Activated B cell treated with CpG ODN at 0.5 μM for 24 hours (primary cell): ENCODE measurements at regions of chr11 and their contacts with region 1.

Region 1: GRCh38 chr11:62880803-62881578 is at the start of gene SLC3A2:
- DNase-seq: peak; percentile 86
- ATAC-seq: peak; percentile 80
- H3K4me3 Mint-ChIP-seq: peak within 1 kb of the TSS; percentile 100
- H3K27ac Mint-ChIP-seq: peak within 1 kb of the TSS; percentile 100
- H3K4me1 Mint-ChIP-seq: peaks cover 46% of the 10 kb centered on the region
- H3K27me3 Mint-ChIP-seq: no peaks in the 10 kb centered on the region
- CTCF ChIP-seq: no peak
- total RNA-seq, gene SLC3A2: 270 and 274 TPM in 2 replicates

Region 2: DNA sequence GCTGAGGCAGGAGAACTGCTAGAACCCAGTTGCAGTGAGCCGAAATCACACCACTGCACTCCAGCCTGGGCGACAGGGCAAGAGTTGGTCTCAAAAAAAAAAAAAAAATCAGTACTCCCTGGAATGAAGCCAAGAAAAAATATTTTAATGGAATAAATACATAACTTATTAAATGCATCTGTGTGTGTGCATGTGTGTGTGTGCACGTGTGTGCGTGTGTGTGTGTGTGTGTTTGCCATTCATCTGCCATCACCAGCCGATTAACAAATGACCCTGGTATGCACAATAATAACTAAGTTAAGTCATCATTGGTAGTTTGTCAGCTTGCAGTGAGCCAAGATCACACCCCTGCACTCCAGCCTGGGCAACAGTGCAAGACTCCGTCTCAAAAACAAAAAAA is 497.2 kb before region 1 on chr11:
- CTCF ChIA-PET with region 1: no interaction called
- POLR2A ChIA-PET with region 1: no interaction called
- intact Hi-C with region 1: loop called (anchors 10 kb)
- DNase-seq: no peak
- ATAC-seq: no peak
- H3K4me3 Mint-ChIP-seq: no peak overlapping the region
- H3K27ac Mint-ChIP-seq: no peak overlapping the region
- H3K4me1 Mint-ChIP-seq: peaks cover 5% of the 10 kb centered on the region
- H3K27me3 Mint-ChIP-seq: no peaks in the 10 kb centered on the region
- CTCF ChIP-seq: no peak

Region 3: DNA sequence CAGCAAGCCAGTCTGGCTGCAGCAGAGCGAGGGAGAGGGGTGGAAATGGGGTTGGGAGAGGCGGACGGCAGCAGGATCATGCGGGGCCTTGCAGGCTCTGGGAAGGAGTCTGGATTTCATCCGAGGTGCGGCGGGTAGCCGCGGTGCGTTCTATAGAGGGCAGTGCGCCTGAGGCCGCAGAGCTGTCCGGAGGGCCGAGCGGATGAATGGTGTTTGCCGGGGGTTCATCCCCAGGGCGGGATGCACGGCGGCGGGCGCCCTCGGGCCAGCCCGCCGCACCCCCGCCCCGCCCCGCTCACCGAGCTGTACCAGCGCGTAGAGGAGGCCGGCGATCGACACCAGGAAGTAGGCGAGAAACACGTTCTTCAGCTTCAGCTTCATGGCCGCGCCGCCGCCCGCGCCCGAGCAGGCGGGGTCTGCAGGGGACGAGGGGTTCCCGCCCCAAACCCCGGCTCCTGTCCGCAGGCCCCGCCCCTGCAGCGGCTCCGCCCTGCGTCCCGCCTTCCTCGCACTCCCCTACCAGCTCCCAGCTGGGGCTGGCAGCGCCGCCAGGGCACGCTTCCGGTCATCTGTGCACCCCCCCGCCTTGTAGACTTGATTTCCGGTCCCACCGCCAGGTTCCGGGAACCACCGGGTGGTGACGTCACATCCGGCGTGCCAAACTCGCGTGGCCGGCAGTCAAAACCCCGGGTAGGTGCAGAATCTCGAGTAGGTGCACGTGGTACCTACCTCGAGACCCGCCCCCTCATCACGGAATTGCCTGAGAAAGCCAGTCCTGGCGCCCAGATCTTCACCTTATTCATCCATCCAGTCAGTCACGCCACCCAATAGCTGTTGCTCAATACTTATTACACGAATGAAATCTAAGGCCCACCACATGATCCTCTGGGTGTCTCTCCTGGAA is 259.2 kb before region 1 on chr11 and contains the start of gene B3GAT3:
- CTCF ChIA-PET with region 1: no interaction called
- POLR2A ChIA-PET with region 1: interaction called, 13 read pairs
- intact Hi-C with region 1: no loop called
- DNase-seq: peak; percentile 93
- ATAC-seq: peak; percentile 92
- H3K4me3 Mint-ChIP-seq: peak within 1 kb of the TSS; percentile 90
- H3K27ac Mint-ChIP-seq: peak within 1 kb of the TSS; percentile 93
- H3K4me1 Mint-ChIP-seq: peaks cover 19% of the 10 kb centered on the region
- H3K27me3 Mint-ChIP-seq: no peaks in the 10 kb centered on the region
- CTCF ChIP-seq: no peak
- total RNA-seq, gene B3GAT3: 48.8 and 56.6 TPM in 2 replicates

Region 4: GRCh38 chr11:62678770-62679696 is 202.0 kb before region 1 on chr11 and contains the start of gene UBXN1:
- CTCF ChIA-PET with region 1: interaction called, 4 read pairs
- POLR2A ChIA-PET with region 1: interaction called, 13 read pairs
- intact Hi-C with region 1: no loop called
- DNase-seq: peak; percentile 77
- ATAC-seq: peak; percentile 74
- H3K4me3 Mint-ChIP-seq: peak within 1 kb of the TSS; percentile 91
- H3K27ac Mint-ChIP-seq: peak within 1 kb of the TSS; percentile 96
- H3K4me1 Mint-ChIP-seq: peaks cover 41% of the 10 kb centered on the region
- H3K27me3 Mint-ChIP-seq: no peaks in the 10 kb centered on the region
- CTCF ChIP-seq: no peak
- total RNA-seq, gene UBXN1: 204 and 205 TPM in 2 replicates

Region 5: GRCh38 chr11:62771144-62772021 is 109.6 kb before region 1 on chr11 and contains the start of gene TAF6L:
- CTCF ChIA-PET with region 1: no interaction called
- POLR2A ChIA-PET with region 1: interaction called, 16 read pairs
- intact Hi-C with region 1: no loop called
- DNase-seq: peak; percentile 81
- ATAC-seq: peak; percentile 88
- H3K4me3 Mint-ChIP-seq: peak within 1 kb of the TSS; percentile 92
- H3K27ac Mint-ChIP-seq: peak within 1 kb of the TSS; percentile 94
- H3K4me1 Mint-ChIP-seq: peaks cover 28% of the 10 kb centered on the region
- H3K27me3 Mint-ChIP-seq: no peaks in the 10 kb centered on the region
- CTCF ChIP-seq: no peak
- total RNA-seq, gene TAF6L: 32.9 and 38.6 TPM in 2 replicates

Region 6: GRCh38 chr11:62816557-62816956 is 64.4 kb before region 1 on chr11:
- CTCF ChIA-PET with region 1: no interaction called
- POLR2A ChIA-PET with region 1: interaction called, 14 read pairs
- intact Hi-C with region 1: no loop called
- DNase-seq: no peak
- ATAC-seq: no peak
- H3K4me3 Mint-ChIP-seq: no peak overlapping the region
- H3K27ac Mint-ChIP-seq: no peak overlapping the region
- H3K4me1 Mint-ChIP-seq: no peaks in the 10 kb centered on the region
- H3K27me3 Mint-ChIP-seq: no peaks in the 10 kb centered on the region
- CTCF ChIP-seq: no peak

Region 7: GRCh38 chr11:62860835-62861563 is 20.0 kb before region 1 on chr11:
- CTCF ChIA-PET with region 1: interaction called, 16 read pairs
- POLR2A ChIA-PET with region 1: interaction called, 155 read pairs
- intact Hi-C with region 1: loop called (anchors 1 kb)
- DNase-seq: no peak
- ATAC-seq: no peak
- H3K4me3 Mint-ChIP-seq: no peak overlapping the region
- H3K27ac Mint-ChIP-seq: no peak overlapping the region
- H3K4me1 Mint-ChIP-seq: peaks cover 24% of the 10 kb centered on the region
- H3K27me3 Mint-ChIP-seq: no peaks in the 10 kb centered on the region
- CTCF ChIP-seq: no peak